Endothelial cell of umbilical vein (primary cell): ENCODE measurements at regions of chr1 and their contacts with region 1.

Region 1: DNA sequence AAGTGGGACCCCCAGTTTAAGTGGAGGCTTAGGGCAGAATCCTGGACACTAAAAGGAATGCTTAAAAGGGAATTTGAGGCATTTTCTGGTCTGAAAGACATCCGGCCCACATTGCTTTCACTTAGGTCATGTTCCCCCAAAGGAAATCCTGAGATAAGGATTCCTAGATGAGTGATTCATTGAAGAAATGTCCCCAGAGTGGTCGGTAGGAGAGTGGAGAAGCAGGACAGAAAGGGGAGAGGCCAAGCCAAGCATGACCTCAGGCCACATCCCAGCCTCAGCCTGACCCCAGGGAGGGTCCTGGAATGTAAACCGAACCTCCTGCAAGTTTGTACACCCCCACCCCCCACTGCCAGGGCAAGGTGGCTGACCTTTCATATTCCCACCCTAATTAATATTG is 16.6 kb downstream of the HIVEP3 start:
- DNase-seq: peak; percentile 83
- H3K4me3 ChIP-seq: peak overlapping the region in 1 of 3 experiments; percentile 76
- H3K27ac ChIP-seq: peak overlapping the region; percentile 97
- H3K4me1 ChIP-seq: peaks cover 57% of the 10 kb centered on the region
- H3K27me3 ChIP-seq: no peaks in the 10 kb centered on the region
- CTCF ChIP-seq: no peak
- POLR2A ChIP-seq: peak; percentile 49

Region 2: DNA sequence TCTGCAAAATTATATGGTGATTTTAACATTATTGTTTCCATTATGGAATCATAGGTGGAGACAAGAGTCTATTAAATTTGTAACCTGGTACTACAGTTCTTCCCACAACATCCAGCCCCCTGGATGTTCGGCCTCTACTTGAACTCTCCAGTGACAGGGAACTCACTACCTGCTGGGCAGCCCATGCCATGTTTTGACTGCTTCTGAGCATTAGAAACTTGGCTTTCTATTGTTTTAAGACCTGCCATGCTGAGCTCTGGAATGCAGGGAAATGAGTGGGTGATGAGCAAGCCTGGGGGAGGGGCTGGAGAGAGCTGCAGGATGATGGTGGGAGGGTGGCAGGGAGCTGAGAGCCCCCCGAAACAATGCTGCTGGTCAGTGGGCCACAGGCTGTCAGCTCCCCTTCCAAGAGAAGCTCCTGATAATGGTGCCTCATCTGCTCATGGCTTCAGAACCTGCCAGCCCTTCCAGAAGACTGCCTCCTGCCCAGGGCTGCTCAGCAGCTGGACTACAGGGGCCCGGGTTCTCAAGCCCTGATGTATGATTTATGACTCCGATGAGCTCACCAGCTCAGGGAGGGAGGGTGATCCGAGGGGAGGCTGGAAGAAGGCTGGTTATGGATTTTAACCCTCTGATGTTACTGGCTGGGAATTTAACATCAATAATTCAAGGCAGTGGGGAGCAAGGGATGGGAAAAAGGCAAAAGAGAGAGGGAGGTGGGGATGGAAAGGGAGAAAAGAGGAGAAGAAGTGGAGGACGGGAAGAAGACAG is 188.4 kb before region 1 on chr1:
- CTCF ChIA-PET with region 1: no interaction called
- POLR2A ChIA-PET with region 1: no interaction called
- dilution Hi-C with region 1: no loop called
- intact Hi-C with region 1: loop called (anchors 5 kb)
- DNase-seq: peak; percentile 86
- H3K4me3 ChIP-seq: no peak overlapping the region
- H3K27ac ChIP-seq: peak overlapping the region; percentile 71
- H3K4me1 ChIP-seq: peaks cover 21% of the 10 kb centered on the region
- H3K27me3 ChIP-seq: no peaks in the 10 kb centered on the region
- CTCF ChIP-seq: no peak
- POLR2A ChIP-seq: no peak

Region 3: GRCh38 chr1:41842993-41843755 is 59.0 kb before region 1 on chr1:
- CTCF ChIA-PET with region 1: interaction called, 3 read pairs
- POLR2A ChIA-PET with region 1: interaction called, 4 read pairs
- dilution Hi-C with region 1: no loop called
- intact Hi-C with region 1: loop called (anchors 2 kb)
- DNase-seq: peak; percentile 52
- H3K4me3 ChIP-seq: no peak overlapping the region
- H3K27ac ChIP-seq: no peak overlapping the region
- H3K4me1 ChIP-seq: peaks cover 43% of the 10 kb centered on the region
- H3K27me3 ChIP-seq: no peaks in the 10 kb centered on the region
- CTCF ChIP-seq: no peak
- POLR2A ChIP-seq: no peak

Region 4: DNA sequence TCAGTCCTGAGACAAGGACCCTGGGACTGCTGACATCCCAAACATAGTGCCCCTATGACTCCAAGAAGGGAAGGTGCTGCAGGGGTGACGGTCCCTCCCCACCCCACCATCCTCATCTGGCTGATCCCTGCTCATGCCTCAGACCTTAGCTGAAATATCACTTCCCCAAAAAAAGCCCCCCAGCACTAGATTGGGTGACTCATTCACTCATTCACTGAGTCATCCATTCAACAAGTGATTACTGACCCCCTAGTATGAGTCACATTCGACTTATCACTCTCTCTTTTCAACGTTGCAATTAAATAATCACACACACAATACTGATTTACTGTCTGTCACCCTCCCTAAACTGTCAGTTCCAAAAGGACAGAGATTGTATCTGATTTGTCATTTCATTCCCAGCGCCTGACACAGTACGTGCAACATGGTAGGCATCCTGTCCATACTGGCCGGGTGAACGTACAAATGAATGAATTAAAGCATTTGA is 32.0 kb before region 1 on chr1:
- CTCF ChIA-PET with region 1: no interaction called
- POLR2A ChIA-PET with region 1: no interaction called
- dilution Hi-C with region 1: no loop called
- intact Hi-C with region 1: loop called (anchors 1 kb)
- DNase-seq: peak; percentile 77
- H3K4me3 ChIP-seq: no peak overlapping the region
- H3K27ac ChIP-seq: peak overlapping the region; percentile 26
- H3K4me1 ChIP-seq: peaks cover 19% of the 10 kb centered on the region
- H3K27me3 ChIP-seq: no peaks in the 10 kb centered on the region
- CTCF ChIP-seq: no peak
- POLR2A ChIP-seq: no peak

Region 5: DNA sequence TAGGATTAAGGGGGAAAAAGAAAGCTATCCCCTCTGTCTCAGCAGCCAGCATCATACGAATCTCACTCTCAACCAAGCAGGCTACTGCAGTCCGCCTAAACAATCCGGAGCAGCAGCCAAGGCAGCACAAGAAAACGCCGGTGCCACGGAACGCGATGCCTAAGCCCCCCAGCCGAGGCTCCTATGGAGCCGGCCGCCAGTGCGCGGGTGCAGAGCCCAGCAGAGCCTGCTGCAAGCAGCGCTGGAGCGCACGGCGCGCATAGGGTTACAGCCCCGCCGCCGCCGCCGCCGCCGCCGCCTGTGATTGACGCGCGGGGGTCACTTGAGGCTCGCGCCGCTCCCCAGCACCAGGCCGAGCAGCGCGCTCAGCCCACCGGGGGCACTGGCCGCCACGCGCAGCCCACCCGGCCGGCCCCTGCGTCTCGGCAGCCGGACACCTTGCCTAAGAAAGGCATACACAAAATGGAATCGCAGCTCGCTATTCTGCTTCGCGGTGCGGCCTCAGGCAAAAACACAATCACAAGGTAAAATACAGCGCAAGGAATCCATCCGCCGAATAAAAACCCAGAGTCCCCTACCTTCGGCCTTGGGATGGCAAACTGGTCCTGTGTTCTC is 15.8 kb after region 1 on chr1:
- CTCF ChIA-PET with region 1: no interaction called
- POLR2A ChIA-PET with region 1: no interaction called
- dilution Hi-C with region 1: no loop called
- intact Hi-C with region 1: loop called (anchors 1 kb)
- DNase-seq: peak; percentile 57
- H3K4me3 ChIP-seq: peak overlapping the region; percentile 21 to 58 (median 45)
- H3K27ac ChIP-seq: no peak overlapping the region
- H3K4me1 ChIP-seq: peaks cover 14% of the 10 kb centered on the region
- H3K27me3 ChIP-seq: no peaks in the 10 kb centered on the region
- CTCF ChIP-seq: no peak
- POLR2A ChIP-seq: no peak

Region 6: GRCh38 chr1:42035830-42036604 is 133.9 kb after region 1 on chr1:
- CTCF ChIA-PET with region 1: interaction called, 6 read pairs
- POLR2A ChIA-PET with region 1: no interaction called
- dilution Hi-C with region 1: no loop called
- intact Hi-C with region 1: loop called (anchors 1 kb)
- DNase-seq: peak; percentile 90
- H3K4me3 ChIP-seq: peak overlapping the region; percentile 2 to 85 (median 85)
- H3K27ac ChIP-seq: no peak overlapping the region
- H3K4me1 ChIP-seq: peaks cover 13% of the 10 kb centered on the region
- H3K27me3 ChIP-seq: peaks cover 4 to 6% of the 10 kb centered on the region in 2 experiments
- CTCF ChIP-seq: no peak
- POLR2A ChIP-seq: peak; percentile 27